Activated CD4-positive, alpha-beta T cell treated with anti-CD3 and anti-CD28 coated beads for 36 hours (primary cell): ENCODE measurements at regions of chrX and their contacts with region 1.

Region 1: DNA sequence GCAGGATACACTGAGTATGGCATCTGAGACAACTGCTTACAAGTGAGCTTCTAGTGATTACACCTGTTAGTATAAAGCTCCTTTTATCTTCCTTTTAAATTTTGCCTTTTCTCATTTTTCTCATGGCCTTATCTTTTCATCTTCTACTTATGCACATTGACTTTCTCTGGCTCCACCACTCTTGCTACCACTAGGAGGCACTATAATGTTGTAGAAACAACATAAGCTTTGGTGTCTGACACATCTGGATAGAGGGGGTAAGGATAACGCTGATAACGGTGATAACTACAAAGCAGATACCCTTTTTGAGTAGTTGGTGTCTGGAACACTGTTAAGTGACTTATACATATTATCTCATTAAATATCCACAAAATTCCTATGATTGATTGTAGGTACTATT is 187.4 kb upstream of the TEX13C start:
- DNase-seq: no peak
- ATAC-seq: peak; percentile 47
- H3K4me3 Mint-ChIP-seq: no peak overlapping the region
- H3K27ac Mint-ChIP-seq: no peak overlapping the region
- H3K4me1 Mint-ChIP-seq: no peaks in the 10 kb centered on the region
- H3K27me3 Mint-ChIP-seq: no peaks in the 10 kb centered on the region

Region 2: GRCh38 chrX:124388562-124388961 is 743.7 kb before region 1 on chrX:
- CTCF ChIA-PET with region 1: interaction called, 5 read pairs
- POLR2A ChIA-PET with region 1: no interaction called
- intact Hi-C with region 1: loop called in 1 of 2 experiments (anchors 1 kb)
- DNase-seq: peak; percentile 73
- ATAC-seq: peak; percentile 65
- H3K4me3 Mint-ChIP-seq: no peak overlapping the region
- H3K27ac Mint-ChIP-seq: no peak overlapping the region
- H3K4me1 Mint-ChIP-seq: peaks cover 27% of the 10 kb centered on the region
- H3K27me3 Mint-ChIP-seq: no peaks in the 10 kb centered on the region

Region 3: GRCh38 chrX:125319646-125320521 is 187.6 kb after region 1 on chrX and contains the start of gene TEX13C:
- CTCF ChIA-PET with region 1: no interaction called
- POLR2A ChIA-PET with region 1: no interaction called
- intact Hi-C with region 1: loop called in 1 of 2 experiments (anchors 5 kb)
- DNase-seq: no peak
- ATAC-seq: no peak
- H3K4me3 Mint-ChIP-seq: no peak within 1 kb of the TSS
- H3K27ac Mint-ChIP-seq: no peak within 1 kb of the TSS
- H3K4me1 Mint-ChIP-seq: no peaks in the 10 kb centered on the region
- H3K27me3 Mint-ChIP-seq: no peaks in the 10 kb centered on the region
- total RNA-seq, gene TEX13C: not detected

Region 4: DNA sequence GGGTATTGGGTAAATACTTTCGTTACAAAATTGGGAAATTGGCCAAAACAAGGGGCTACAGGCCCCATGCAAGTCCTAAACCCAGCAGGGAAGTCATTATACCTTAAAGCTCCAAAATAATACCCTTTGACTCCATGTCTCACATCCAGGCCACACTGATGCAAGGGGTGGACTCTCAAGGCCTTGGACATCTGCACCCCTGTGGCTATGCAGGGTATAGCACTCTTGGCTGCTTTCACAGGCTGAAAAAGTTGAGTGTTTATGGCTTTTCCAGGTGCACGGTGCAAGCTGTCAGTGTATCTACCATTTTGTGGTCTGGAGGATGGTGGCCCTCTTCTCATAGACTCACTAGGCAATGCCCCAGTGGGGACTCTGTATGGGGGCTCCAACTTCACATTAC is 513.9 kb after region 1 on chrX:
- CTCF ChIA-PET with region 1: no interaction called
- POLR2A ChIA-PET with region 1: no interaction called
- intact Hi-C with region 1: loop called in 1 of 2 experiments (anchors 10 kb)
- DNase-seq: peak; percentile 15
- ATAC-seq: no peak
- H3K4me3 Mint-ChIP-seq: no peak overlapping the region
- H3K27ac Mint-ChIP-seq: no peak overlapping the region
- H3K4me1 Mint-ChIP-seq: no peaks in the 10 kb centered on the region
- H3K27me3 Mint-ChIP-seq: no peaks in the 10 kb centered on the region